HepG2 (cell line): ENCODE measurements at regions of chr5 and their contacts with region 1.

Region 1: DNA sequence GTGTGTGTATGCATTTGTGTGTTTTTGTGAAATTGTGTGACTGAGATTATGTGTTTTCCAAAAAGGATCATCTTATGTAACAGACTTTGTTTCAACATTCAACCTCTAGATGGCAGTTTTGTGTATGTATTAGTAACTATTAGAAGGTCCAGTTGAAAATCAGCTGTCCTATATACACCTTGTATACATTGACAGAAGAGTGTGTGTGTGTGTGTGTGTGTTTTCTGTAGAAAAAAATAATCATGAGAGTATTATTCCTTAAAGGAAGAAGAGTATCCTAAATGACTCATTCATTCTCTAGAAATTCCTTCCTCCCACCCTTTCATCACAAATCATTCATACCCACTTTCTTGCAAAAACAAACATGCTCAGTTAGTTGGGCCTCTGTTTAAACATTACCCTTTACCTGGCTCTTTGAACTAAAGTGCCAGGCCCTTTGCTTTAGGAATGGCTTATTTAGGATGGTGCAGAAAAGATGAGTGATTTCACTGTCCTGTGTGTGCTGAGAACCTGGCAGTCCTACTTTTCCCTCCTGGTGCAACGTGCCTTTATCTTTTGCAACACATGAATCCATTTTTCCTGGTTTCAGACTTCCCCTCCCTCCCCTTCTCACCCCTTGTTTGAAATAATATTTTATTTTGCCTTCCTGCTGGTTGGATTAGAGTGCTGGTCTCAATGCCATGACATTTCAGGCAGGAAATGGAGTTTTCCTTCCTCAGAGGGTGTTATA is 152.2 kb downstream of the ARHGAP26 start:
- DNase-seq: peak; percentile 95
- ATAC-seq: peak; percentile 95
- H3K4me3 ChIP-seq: no peak overlapping the region
- H3K27ac ChIP-seq: peak overlapping the region; percentile 66
- H3K4me1 ChIP-seq: peaks cover 37% of the 10 kb centered on the region
- H3K27me3 ChIP-seq: no peaks in the 10 kb centered on the region
- CTCF ChIP-seq: peak; percentile 65
- EP300 ChIP-seq: peak in 1 of 2 experiments; percentile 91; a peak in 2 of 4 replicates
- POLR2A ChIP-seq: no peak
- RAD21 ChIP-seq: no peak

Region 2: GRCh38 chr5:142959683-142960657 is 37.6 kb after region 1 on chr5:
- CTCF ChIA-PET with region 1: no interaction called
- POLR2A ChIA-PET with region 1: interaction called, 5 read pairs
- in situ Hi-C with region 1: no loop called
- intact Hi-C with region 1: loop called (anchors 5 kb)
- DNase-seq: peak; percentile 44
- ATAC-seq: peak; percentile 43; the same call in 2 of the 3 replicates
- H3K4me3 ChIP-seq: no peak overlapping the region
- H3K27ac ChIP-seq: no peak overlapping the region
- H3K4me1 ChIP-seq: peaks cover 47% of the 10 kb centered on the region
- H3K27me3 ChIP-seq: no peaks in the 10 kb centered on the region
- CTCF ChIP-seq: no peak
- EP300 ChIP-seq: no peak
- POLR2A ChIP-seq: no peak
- RAD21 ChIP-seq: no peak

Region 3: GRCh38 chr5:143014017-143014651 is 91.7 kb after region 1 on chr5:
- CTCF ChIA-PET with region 1: no interaction called
- POLR2A ChIA-PET with region 1: no interaction called
- in situ Hi-C with region 1: no loop called
- intact Hi-C with region 1: loop called (anchors 2 kb)
- DNase-seq: no peak
- ATAC-seq: no peak
- H3K4me3 ChIP-seq: no peak overlapping the region
- H3K27ac ChIP-seq: no peak overlapping the region
- H3K4me1 ChIP-seq: peaks cover 31% of the 10 kb centered on the region
- H3K27me3 ChIP-seq: no peaks in the 10 kb centered on the region
- CTCF ChIP-seq: peak; percentile 57
- EP300 ChIP-seq: no peak
- POLR2A ChIP-seq: no peak
- RAD21 ChIP-seq: no peak

Region 4: GRCh38 chr5:143134900-143135299 is 212.5 kb after region 1 on chr5:
- CTCF ChIA-PET with region 1: no interaction called
- POLR2A ChIA-PET with region 1: no interaction called
- in situ Hi-C with region 1: no loop called
- intact Hi-C with region 1: loop called (anchors 1 kb)
- DNase-seq: no peak
- ATAC-seq: no peak
- H3K4me3 ChIP-seq: no peak overlapping the region
- H3K27ac ChIP-seq: no peak overlapping the region
- H3K4me1 ChIP-seq: peaks cover 19% of the 10 kb centered on the region
- H3K27me3 ChIP-seq: no peaks in the 10 kb centered on the region
- CTCF ChIP-seq: no peak
- EP300 ChIP-seq: no peak
- POLR2A ChIP-seq: no peak
- RAD21 ChIP-seq: no peak

Region 5: DNA sequence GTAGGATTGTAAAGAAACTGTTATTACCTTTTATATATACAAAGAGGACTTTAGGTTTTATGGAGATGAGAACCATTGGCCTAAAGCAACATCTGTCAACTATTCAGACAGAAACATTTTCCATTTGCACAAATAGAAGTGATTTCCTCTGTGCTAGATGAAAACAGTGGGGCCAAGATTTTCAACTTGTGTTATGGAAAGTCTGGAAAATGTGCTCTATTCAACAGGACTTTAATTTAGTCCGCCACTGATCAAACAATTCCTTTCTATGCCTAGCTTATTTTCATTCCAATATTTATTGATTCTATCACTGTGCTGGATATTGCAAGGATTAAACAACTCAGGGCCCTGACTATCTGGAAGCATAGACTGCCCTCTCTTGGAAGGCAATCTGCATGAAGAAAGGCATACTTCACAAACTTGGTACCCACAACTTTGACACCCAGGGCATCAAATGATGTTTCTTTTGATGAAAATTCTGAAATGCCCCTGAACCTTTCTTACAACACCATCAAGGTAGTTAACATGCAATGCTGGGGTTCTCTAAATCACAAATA is 762.9 kb after region 1 on chr5:
- CTCF ChIA-PET with region 1: no interaction called
- POLR2A ChIA-PET with region 1: no interaction called
- in situ Hi-C with region 1: no loop called
- intact Hi-C with region 1: loop called (anchors 10 kb)
- DNase-seq: peak; percentile 24
- ATAC-seq: no peak
- H3K4me3 ChIP-seq: no peak overlapping the region
- H3K27ac ChIP-seq: no peak overlapping the region
- H3K4me1 ChIP-seq: peaks cover 34% of the 10 kb centered on the region
- H3K27me3 ChIP-seq: no peaks in the 10 kb centered on the region; a peak in 1 of 5 replicates
- CTCF ChIP-seq: peak; percentile 46
- EP300 ChIP-seq: no peak
- POLR2A ChIP-seq: no peak
- RAD21 ChIP-seq: no peak

Region 6: GRCh38 chr5:144004146-144004545 is 1081.8 kb after region 1 on chr5:
- CTCF ChIA-PET with region 1: no interaction called
- POLR2A ChIA-PET with region 1: no interaction called
- in situ Hi-C with region 1: no loop called
- intact Hi-C with region 1: no loop called
- DNase-seq: no peak
- ATAC-seq: no peak
- H3K4me3 ChIP-seq: no peak overlapping the region
- H3K27ac ChIP-seq: no peak overlapping the region
- H3K4me1 ChIP-seq: no peaks in the 10 kb centered on the region
- H3K27me3 ChIP-seq: no peaks in the 10 kb centered on the region
- CTCF ChIP-seq: no peak
- EP300 ChIP-seq: no peak
- POLR2A ChIP-seq: no peak
- RAD21 ChIP-seq: no peak